Calu3 (cell line): ENCODE measurements at regions of chr13 and their contacts with region 1.

Region 1: GRCh38 chr13:76489274-76489673 is 396.9 kb downstream of the KCTD12 start:
- DNase-seq: no peak
- H3K4me3 Mint-ChIP-seq: no peak overlapping the region
- H3K27ac Mint-ChIP-seq: no peak overlapping the region
- H3K4me1 Mint-ChIP-seq: no peaks in the 10 kb centered on the region
- H3K27me3 Mint-ChIP-seq: no peaks in the 10 kb centered on the region
- CTCF ChIP-seq: no peak

Region 2: DNA sequence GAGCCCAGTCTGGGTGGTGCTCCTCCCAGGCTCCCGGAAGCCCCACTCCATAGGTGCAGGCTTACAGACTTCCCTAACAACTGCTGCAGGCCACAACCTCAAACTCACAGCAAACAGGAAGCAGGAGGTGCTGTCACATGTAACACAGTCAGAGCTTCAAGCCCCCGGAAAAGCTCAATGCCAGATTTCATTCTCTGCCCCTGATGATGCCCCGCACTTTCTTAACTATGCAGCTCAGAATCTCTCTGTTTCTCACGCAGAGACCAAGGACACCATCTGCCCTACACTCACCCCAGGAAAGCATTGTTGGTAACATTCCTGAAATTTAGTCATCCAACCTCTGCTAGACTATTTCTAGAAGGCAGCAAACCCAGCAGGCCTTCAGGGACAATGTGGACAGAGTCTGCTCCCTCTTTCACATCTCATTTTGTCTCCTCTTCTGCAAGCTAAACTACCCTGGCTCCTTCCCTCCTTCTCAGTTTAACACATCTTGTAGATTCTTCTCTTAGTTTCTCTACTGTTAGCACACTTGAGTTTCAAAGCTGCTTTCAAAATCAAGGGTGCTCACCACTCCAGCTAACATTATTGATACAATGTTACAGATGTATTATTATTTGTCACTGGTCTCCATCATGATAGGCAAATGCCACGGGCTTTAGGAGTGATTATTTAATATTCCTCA is 234.4 kb after region 1 on chr13:
- CTCF ChIA-PET with region 1: no interaction called
- intact Hi-C with region 1: no loop called
- DNase-seq: no peak
- H3K4me3 Mint-ChIP-seq: no peak overlapping the region
- H3K27ac Mint-ChIP-seq: no peak overlapping the region
- H3K4me1 Mint-ChIP-seq: no peaks in the 10 kb centered on the region
- H3K27me3 Mint-ChIP-seq: no peaks in the 10 kb centered on the region
- CTCF ChIP-seq: no peak

Region 3: GRCh38 chr13:76894401-76895110 is 405.3 kb after region 1 on chr13:
- CTCF ChIA-PET with region 1: no interaction called
- intact Hi-C with region 1: loop called (anchors 10 kb)
- DNase-seq: no peak
- H3K4me3 Mint-ChIP-seq: no peak overlapping the region
- H3K27ac Mint-ChIP-seq: no peak overlapping the region
- H3K4me1 Mint-ChIP-seq: no peaks in the 10 kb centered on the region
- H3K27me3 Mint-ChIP-seq: no peaks in the 10 kb centered on the region
- CTCF ChIP-seq: no peak